Activated CD4-positive, alpha-beta memory T cell treated with anti-CD3 and anti-CD28 coated beads for 36 hours (primary cell): ENCODE measurements at regions of chr5 and their contacts with region 1.

Region 1: GRCh38 chr5:43514816-43515677 is at the start of gene C5orf34:
- DNase-seq: peak; percentile 97
- H3K4me3 Mint-ChIP-seq: peak within 1 kb of the TSS; percentile 95
- H3K27ac Mint-ChIP-seq: peak within 1 kb of the TSS; percentile 99
- H3K4me1 Mint-ChIP-seq: peaks cover 26% of the 10 kb centered on the region
- H3K27me3 Mint-ChIP-seq: no peaks in the 10 kb centered on the region
- total RNA-seq, gene C5orf34: 11.8 to 13.1 TPM

Region 2: DNA sequence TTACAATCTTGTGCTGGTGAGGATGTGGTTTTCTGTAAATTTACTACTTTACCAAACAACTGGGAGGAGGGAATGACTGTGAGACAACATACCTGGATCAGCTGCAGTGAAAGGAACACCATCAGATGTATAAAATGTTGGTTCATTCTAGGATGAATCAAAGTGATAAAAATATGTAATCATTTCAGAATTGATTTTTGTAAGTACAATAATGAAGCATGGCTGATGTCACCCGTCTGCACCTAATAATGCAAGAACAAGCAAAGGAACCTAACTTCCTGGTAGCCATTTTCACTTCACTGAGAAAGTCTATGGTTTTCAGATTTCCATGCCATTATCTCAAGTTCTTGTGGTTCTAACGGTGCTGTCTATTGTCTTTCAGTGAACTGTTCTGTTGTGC is 18.6 kb after region 1 on chr5:
- CTCF ChIA-PET with region 1: interaction called, 3 read pairs
- POLR2A ChIA-PET with region 1: no interaction called
- intact Hi-C with region 1: loop called (anchors 1 kb)
- DNase-seq: peak; percentile 29
- H3K4me3 Mint-ChIP-seq: no peak overlapping the region
- H3K27ac Mint-ChIP-seq: peak overlapping the region; percentile 79
- H3K4me1 Mint-ChIP-seq: peaks cover 12% of the 10 kb centered on the region
- H3K27me3 Mint-ChIP-seq: no peaks in the 10 kb centered on the region

Region 3: DNA sequence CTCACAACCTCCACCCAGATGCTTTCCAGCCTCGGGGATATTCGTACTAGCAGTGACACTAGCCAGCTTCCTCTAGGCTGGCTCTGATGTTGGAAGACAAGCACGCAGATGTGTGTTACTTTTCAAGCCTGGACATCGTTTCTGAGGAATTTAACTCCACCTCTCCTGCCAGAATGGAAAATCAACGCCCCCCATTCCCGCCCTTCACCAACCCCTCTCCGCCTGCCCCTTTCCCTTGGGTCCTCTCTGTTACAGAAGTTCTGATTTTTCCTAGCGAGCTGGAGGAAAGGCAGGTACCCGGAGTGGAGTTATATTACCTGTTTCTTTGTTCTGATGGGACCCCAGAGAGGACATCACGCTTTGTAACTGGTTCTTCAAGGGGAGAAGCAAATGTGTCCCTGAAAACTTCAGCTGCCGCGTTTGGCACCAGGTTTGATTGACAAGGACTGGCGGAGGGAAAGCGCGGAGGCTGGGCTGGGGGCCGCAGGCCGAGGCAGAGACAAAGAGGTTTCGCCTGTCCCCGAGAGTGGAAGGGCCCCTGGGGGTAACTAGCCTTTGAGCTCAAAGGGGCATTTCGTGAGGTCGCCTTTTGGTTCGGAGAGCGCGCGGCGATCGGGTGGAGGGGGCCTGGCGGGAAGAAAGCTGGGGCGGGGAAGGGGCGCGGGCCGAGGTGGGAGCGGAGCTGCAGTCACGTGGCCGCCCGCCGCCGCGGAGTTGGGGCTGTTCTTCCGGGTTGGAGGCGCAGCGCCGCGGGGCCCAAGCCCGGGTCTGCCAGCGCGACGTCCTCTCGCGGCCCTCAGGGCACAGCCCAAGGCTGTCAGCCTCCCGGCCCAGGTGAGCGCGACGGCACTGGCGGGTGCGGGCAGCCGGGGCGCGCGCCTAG is 87.7 kb after region 1 on chr5 and contains the start of gene NNT:
- CTCF ChIA-PET with region 1: no interaction called
- POLR2A ChIA-PET with region 1: interaction called, 14 read pairs
- intact Hi-C with region 1: loop called (anchors 1 kb)
- DNase-seq: peak; percentile 84
- H3K4me3 Mint-ChIP-seq: peak within 1 kb of the TSS; percentile 97
- H3K27ac Mint-ChIP-seq: peak within 1 kb of the TSS; percentile 93
- H3K4me1 Mint-ChIP-seq: peaks cover 35% of the 10 kb centered on the region
- H3K27me3 Mint-ChIP-seq: no peaks in the 10 kb centered on the region
- total RNA-seq, gene NNT: 96.6 to 99.9 TPM

Region 4: GRCh38 chr5:44808435-44809214 is 1293.6 kb after region 1 on chr5 and contains the start of gene MRPS30:
- CTCF ChIA-PET with region 1: no interaction called
- POLR2A ChIA-PET with region 1: no interaction called
- intact Hi-C with region 1: loop called (anchors 1 kb)
- DNase-seq: peak; percentile 94
- H3K4me3 Mint-ChIP-seq: peak within 1 kb of the TSS; percentile 99
- H3K27ac Mint-ChIP-seq: peak within 1 kb of the TSS; percentile 98
- H3K4me1 Mint-ChIP-seq: peaks cover 29% of the 10 kb centered on the region
- H3K27me3 Mint-ChIP-seq: peaks cover 1% of the 10 kb centered on the region
- total RNA-seq, gene MRPS30: 47.1 to 49.3 TPM